ENCODE measurements at regions of chr18 and their contacts with region 1.

Region 1: DNA sequence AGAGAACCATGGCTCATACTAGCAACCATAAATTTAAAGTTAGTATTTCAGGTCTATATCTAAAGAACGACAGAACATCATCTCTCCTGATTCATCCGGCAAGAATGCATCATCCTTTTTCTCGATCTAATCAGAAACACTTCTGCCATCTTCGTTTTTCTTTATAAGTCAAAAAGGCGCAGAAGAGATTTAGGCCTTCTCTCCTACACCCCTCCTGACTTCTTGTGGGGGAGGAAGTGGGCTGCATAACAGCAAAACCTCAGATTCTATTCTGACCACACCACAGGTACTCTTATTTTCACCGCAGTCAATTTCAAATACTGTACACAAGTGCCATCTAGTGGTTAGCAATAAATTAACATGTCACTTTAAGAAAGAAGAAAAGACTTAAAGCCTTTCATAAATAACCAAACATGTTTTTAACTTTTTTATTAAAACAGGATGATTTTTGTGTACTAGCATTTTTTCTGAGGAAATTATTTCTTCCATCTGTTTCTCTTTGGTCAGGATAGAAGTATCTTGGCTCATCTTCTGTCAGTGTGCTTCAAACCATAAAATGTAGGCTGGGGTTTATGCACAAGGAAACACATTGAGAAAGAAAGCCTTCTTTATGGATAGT is 48.4 kb upstream of the PIK3C3 start:
- DNase-seq: no peak

Region 2: GRCh38 chr18:41753826-41754225 is 152.8 kb before region 1 on chr18:
- intact Hi-C with region 1: loop called (anchors 10 kb)
- DNase-seq: no peak

Region 3: GRCh38 chr18:42052122-42052708 is 145.6 kb after region 1 on chr18:
- intact Hi-C with region 1: no loop called
- DNase-seq: no peak